Aorta (tissue), 5 donors: ENCODE measurements at regions of chr6 and their contacts with region 1.

Region 1: GRCh38 chr6:116371120-116371917 is 572 bp downstream of the DSE start:
- DNase-seq: peak; percentile 92 to 94
- ATAC-seq: peak; percentile 86
- H3K4me3 ChIP-seq: peak overlapping the region; percentile 56 to 86
- H3K27ac ChIP-seq: peak overlapping the region; percentile 72 to 97
- H3K4me1 ChIP-seq: peaks cover 0 to 2% of the 10 kb centered on the region in 2 donors
- H3K27me3 ChIP-seq: no peaks in the 10 kb centered on the region

Region 2: GRCh38 chr6:116328528-116328903 is 42.8 kb before region 1 on chr6:
- intact Hi-C with region 1: loop called in 1 of 2 experiments (anchors 5 kb)
- DNase-seq: no peak
- ATAC-seq: peak; percentile 65
- H3K4me3 ChIP-seq: no peak overlapping the region
- H3K27ac ChIP-seq: no peak overlapping the region
- H3K4me1 ChIP-seq: no peaks in the 10 kb centered on the region
- H3K27me3 ChIP-seq: no peaks in the 10 kb centered on the region

Region 3: DNA sequence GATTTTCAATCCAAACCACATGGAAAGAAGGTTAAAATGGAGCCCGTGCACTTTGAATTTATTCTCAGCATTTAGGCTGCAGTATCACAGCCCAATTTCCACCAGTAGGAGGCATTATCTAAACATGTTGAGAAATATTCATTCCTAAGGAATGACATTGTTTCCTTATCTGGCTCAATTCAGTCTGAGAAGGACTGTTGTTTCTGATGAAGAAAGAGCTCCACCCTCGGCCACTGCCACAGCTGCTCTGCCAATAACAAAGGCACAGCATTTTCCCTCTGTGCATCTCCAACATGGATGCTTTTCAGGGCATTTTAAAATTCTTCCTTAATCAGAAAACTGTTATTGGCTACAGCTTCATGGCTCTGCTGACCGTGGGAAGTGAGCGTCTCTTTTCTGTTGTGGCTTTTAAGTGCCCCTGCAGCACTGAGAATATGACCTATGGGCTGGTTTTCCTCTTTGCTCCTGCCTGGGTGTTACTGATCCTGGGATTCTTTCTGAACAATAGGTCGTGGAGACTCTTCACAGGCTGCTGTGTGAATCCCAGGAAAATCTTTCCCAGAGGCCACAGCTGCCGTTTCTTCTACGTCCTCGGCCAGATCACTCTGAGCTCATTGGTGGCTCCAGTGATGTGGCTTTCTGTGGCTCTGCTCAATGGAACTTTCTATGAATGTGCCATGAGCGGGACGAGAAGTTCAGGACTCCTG is 140.2 kb after region 1 on chr6 and contains the start of gene CALHM5:
- intact Hi-C with region 1: loop called in 1 of 2 experiments (anchors 2 kb)
- DNase-seq: peak; percentile 65 to 79
- ATAC-seq: peak; percentile 94
- H3K4me3 ChIP-seq: peak within 1 kb of the TSS; percentile 87 to 100
- H3K27ac ChIP-seq: peak within 1 kb of the TSS; percentile 36 to 99
- H3K4me1 ChIP-seq: peaks cover 2 to 3% of the 10 kb centered on the region in 2 donors
- H3K27me3 ChIP-seq: peaks cover 0 to 1% of the 10 kb centered on the region in 2 donors
- total RNA-seq, gene CALHM5: 11.5 to 15.4 TPM